PC-9 (cell line): ENCODE measurements at regions of chr2 and their contacts with region 1.

Region 1: GRCh38 chr2:27362678-27363420 is 6.3 kb upstream of the GTF3C2 start:
- DNase-seq: no peak
- H3K4me3 ChIP-seq: no peak overlapping the region
- H3K27ac ChIP-seq: no peak overlapping the region
- H3K4me1 ChIP-seq: peaks cover 7% of the 10 kb centered on the region
- H3K27me3 ChIP-seq: no peaks in the 10 kb centered on the region
- CTCF ChIP-seq: no peak

Region 2: GRCh38 chr2:26712486-26713465 is 650.1 kb before region 1 on chr2:
- CTCF ChIA-PET with region 1: no interaction called
- POLR2A ChIA-PET with region 1: no interaction called
- intact Hi-C with region 1: no loop called
- DNase-seq: no peak
- H3K4me3 ChIP-seq: no peak overlapping the region
- H3K27ac ChIP-seq: no peak overlapping the region
- H3K4me1 ChIP-seq: no peaks in the 10 kb centered on the region
- H3K27me3 ChIP-seq: no peaks in the 10 kb centered on the region
- CTCF ChIP-seq: no peak

Region 3: DNA sequence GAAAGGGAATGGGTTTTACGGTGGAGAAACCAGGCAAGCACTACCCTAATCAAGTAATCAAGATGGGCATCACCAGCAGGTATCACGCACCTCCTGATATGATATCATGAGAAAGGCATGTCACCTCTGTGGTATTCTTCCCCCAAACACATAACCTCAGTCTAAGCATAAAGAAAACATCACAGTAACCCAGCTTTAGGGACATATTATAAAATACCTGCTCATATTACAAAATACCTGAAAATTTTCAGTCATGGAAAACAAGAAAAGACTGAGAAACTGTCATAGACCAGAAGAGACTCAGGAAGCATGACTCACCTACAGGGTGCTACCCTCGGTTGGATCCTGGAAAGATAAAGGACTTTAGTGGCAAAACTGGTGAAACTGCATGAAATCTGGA is 164.3 kb after region 1 on chr2:
- CTCF ChIA-PET with region 1: no interaction called
- POLR2A ChIA-PET with region 1: interaction called, 31 read pairs
- intact Hi-C with region 1: no loop called
- DNase-seq: peak; percentile 45 to 95
- H3K4me3 ChIP-seq: no peak overlapping the region
- H3K27ac ChIP-seq: peak overlapping the region; percentile 94
- H3K4me1 ChIP-seq: peaks cover 20% of the 10 kb centered on the region
- H3K27me3 ChIP-seq: no peaks in the 10 kb centered on the region
- CTCF ChIP-seq: no peak